Head of caudate nucleus (tissue), 42 donors: ENCODE measurements at regions of chr4 and their contacts with region 1.

Region 1: GRCh38 chr4:70993181-70994068 is at the start of gene DCK:
- DNase-seq: peak; percentile 57 to 95 (median 89)

Region 2: GRCh38 chr4:70704331-70705145 is 288.9 kb before region 1 on chr4:
- intact Hi-C with region 1: loop called (anchors 10 kb)
- DNase-seq: peak; percentile 28 to 90 (median 77)

Region 3: DNA sequence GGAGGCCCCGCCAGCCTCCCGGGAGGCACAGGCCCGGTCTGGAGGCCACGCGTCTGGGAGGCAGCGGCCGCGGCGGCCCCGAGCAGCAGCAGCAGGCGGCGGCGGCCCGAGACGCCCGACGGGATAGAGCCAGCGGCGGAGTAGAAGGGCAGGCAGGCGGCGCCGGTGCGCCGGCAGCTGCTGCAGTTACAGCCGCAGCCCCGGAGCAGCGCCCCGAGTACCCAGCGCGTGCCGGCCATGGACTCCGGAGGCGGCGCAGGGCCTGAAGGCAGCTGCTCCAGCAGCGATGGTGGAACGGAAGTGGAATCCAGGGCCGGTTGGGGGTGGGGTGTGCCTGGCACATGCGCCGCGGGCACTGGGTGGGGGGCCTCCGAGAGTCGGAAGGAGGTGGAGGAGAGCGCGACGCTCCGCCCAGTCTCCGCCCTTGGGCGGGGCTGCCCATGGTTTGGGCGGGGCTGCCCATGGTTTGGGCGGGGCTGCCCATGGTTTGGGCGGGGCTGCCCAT is 153.8 kb before region 1 on chr4 and contains the start of gene GRSF1:
- intact Hi-C with region 1: loop called (anchors 5 kb)
- DNase-seq: peak; percentile 81 to 97 (median 95)

Region 4: DNA sequence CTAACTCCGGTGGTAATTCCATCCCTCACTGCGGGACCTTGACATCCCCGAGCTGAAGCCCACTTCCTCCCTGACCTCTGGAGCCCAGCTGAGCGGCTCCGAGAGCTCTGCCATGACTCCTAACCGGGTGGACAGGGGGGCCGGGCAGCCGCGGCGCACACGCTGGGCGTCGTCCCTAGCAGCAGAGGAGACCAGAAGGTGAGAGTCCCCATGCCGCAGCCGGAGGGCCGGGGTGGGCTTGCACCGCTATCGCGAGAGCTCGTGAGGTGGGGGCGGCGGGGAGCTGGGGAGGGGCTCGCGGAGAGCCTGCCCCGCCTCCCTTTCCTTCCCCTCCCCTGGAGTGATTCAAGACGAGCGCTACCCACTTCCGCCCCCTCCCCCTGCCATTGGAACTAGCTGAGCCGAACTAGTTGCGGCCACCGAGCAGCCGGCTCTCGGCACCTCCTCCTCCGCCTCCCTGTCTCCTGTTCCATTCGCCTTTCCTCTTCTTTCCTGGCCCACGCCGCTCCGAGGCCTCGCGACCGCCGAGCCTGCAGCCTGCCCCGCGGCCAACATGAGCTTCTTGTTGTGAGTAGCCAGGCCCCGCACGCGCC is 91.3 kb before region 1 on chr4 and contains the start of gene MOB1B:
- intact Hi-C with region 1: loop called (anchors 5 kb)
- DNase-seq: peak; percentile 65 to 95 (median 86)

Region 5: GRCh38 chr4:71066737-71067716 is 73.6 kb after region 1 on chr4:
- intact Hi-C with region 1: no loop called
- DNase-seq: no peak